Sciatic nerve (tissue), 2 donors: ENCODE measurements at regions of chr4 and their contacts with region 1.

Region 1: DNA sequence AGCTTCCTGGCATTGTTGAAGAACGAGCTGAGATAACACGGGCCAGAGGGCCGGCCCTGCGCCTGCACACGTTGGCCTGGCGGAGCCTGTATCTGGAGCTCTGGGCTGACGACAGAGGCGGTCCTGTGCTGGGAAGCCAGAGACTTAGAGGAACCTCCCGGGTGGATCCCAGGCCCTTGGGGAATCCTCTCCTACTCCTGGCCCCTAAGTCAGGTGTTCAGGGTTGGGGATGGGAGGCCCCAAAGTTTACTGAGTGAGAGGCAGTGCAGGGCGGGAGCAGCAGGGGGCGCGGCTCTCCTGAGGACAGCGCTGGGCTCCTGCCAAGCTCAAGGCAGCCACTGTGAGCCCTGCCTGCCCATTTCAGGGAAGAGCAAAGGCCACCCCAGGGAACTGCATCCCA is 2.5 kb upstream of the HTRA3 start:
- DNase-seq: peak; percentile 79
- ATAC-seq: peak; percentile 71

Region 2: DNA sequence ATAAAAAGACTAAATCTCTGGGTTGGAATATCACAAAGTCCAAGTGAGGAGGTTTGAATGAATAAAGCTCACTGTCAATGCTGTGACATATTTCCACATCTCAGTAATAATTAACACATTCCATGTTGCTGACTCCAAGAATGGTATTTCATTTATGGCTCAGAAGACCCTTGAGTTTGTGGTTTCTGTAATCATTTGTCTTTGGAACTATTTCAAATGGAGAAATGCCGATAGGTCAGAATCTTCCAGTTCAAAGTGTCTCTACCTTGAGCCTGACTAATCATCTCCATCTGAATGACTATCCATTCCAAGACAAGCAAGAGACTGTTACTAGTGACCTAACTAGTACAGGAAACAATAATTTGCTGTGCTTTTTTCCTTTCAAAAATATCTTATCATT is 1778.4 kb after region 1 on chr4:
- intact Hi-C with region 1: loop called (anchors 5 kb)
- DNase-seq: no peak
- ATAC-seq: no peak